Common myeloid progenitor, CD34-positive (primary cell): ENCODE measurements at regions of chr10 and their contacts with region 1.

Region 1: GRCh38 chr10:51960494-51960895 is 261.1 kb upstream of the CSTF2T start:
- DNase-seq: peak; percentile 38 to 69 (median 60)
- H3K4me3 ChIP-seq: no peak overlapping the region
- H3K27ac ChIP-seq: no peak overlapping the region
- H3K4me1 ChIP-seq: no peaks in the 10 kb centered on the region
- H3K27me3 ChIP-seq: no peaks in the 10 kb centered on the region

Region 2: GRCh38 chr10:51389415-51390321 is 570.8 kb before region 1 on chr10:
- CTCF ChIA-PET with region 1: interaction called, 11 read pairs
- POLR2A ChIA-PET with region 1: no interaction called
- DNase-seq: peak; percentile 40 to 55 (median 47)
- H3K4me3 ChIP-seq: no peak overlapping the region
- H3K27ac ChIP-seq: no peak overlapping the region
- H3K4me1 ChIP-seq: no peaks in the 10 kb centered on the region
- H3K27me3 ChIP-seq: no peaks in the 10 kb centered on the region

Region 3: DNA sequence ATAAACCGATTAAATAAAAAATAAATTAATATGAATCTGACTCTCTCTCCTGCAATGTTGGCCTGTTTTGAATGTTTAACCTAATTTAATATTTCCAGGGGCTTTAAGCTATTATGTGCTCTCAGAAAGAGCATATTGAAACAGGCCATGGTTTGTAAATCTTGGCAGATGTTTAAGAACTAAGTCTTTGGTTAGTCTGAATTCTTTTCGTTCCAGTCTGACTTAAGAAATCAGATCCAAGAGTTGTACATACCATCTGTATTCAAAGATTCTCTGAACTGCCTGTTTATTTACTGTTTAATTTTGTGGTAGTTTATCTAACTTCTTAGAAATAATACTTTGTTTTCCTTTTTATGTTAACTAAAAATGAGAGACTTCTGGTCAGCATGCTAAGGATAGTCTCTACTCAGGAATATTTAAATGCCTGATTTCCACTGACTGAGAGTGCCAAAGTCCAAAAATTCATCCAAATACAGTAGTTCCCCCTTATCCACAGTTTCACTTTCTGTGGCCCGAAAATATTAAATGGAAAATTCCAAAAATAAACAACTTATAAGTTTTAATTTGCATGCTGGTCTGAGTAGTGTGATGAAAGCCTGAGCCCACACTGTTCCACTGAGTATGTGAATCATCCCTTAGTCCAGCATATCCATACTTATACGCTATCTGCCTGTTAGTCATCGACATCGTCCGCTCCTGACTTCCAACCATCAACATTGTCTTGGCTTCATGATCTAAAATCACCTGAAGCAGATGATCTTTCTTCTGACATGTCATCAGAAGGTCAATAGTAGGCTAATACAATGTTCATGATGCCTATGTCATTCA is 23.0 kb before region 1 on chr10:
- CTCF ChIA-PET with region 1: no interaction called
- POLR2A ChIA-PET with region 1: no interaction called
- DNase-seq: no peak
- H3K4me3 ChIP-seq: no peak overlapping the region
- H3K27ac ChIP-seq: no peak overlapping the region
- H3K4me1 ChIP-seq: peaks cover 0 to 7% (median 0%) of the 10 kb centered on the region in 4 experiments
- H3K27me3 ChIP-seq: no peaks in the 10 kb centered on the region

Region 4: DNA sequence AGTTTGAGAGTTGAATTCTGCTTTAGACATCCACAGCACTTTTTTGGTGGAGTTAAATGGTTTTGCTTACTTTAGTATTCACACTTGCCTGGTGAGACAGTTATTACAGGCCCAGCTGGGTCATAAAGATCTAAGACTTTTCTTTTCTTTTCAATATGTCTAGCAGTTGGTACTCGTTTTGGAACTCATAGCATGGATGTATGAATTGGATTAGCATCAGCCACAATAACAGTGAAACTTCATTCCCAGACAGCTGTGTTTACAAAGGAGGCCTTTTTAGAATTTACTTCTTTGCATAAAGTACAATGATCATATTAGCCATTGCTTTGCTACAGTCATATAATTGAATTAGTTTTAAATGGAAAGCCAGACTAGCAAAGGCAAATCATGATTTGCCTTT is 185.1 kb after region 1 on chr10:
- CTCF ChIA-PET with region 1: no interaction called
- POLR2A ChIA-PET with region 1: no interaction called
- DNase-seq: no peak
- H3K4me3 ChIP-seq: no peak overlapping the region
- H3K27ac ChIP-seq: no peak overlapping the region
- H3K4me1 ChIP-seq: no peaks in the 10 kb centered on the region
- H3K27me3 ChIP-seq: no peaks in the 10 kb centered on the region